Tibial artery (tissue), 4 donors: ENCODE measurements at regions of chr4 and their contacts with region 1.

Region 1: GRCh38 chr4:164177153-164177552 is 576.8 kb upstream of the SMIM31 start:
- DNase-seq: no peak
- H3K4me3 ChIP-seq: no peak overlapping the region
- H3K27ac ChIP-seq: no peak overlapping the region
- H3K4me1 ChIP-seq: no peaks in the 10 kb centered on the region
- H3K27me3 ChIP-seq: no peaks in the 10 kb centered on the region
- CTCF ChIP-seq: no peak

Region 2: DNA sequence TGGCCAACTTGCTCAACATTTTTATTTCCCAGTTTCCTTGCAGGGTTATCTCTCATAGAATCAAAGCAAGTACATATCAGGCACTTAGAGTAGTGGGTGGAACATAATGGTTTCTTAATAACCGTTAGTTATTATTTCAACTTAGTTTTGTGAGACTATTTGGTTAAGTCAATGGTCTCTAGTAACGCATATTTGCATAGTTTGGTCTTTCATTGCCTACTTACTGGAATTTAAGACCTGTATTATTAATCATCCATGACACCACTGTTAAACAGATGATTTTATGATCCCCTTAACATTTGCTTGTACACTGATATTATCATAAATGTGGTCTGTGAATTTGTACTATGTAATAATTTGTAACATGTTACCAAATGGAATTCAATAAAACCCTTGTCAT is 505.9 kb after region 1 on chr4:
- intact Hi-C with region 1: loop called (anchors 5 kb)
- DNase-seq: no peak
- H3K4me3 ChIP-seq: no peak overlapping the region
- H3K27ac ChIP-seq: no peak overlapping the region
- H3K4me1 ChIP-seq: no peaks in the 10 kb centered on the region
- H3K27me3 ChIP-seq: no peaks in the 10 kb centered on the region
- CTCF ChIP-seq: no peak

Region 3: DNA sequence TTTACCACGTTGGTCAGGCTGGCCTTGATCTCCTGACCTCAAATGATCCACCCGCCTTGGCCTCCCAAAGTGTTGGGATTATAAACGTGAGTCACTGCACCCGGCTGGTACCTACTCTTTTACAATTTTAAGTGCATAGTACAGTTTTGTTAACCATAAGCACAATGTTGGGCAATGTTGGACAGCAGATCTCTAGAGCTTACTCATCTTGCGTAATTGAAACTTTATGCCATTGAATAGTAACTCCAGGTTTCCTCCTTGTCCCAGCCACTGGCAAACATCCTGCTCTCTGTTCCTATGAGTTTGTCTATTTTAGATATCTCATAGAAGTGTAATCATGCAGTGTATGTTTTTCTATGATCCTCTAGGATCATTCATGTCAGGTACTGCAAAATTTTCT is 1192.4 kb after region 1 on chr4:
- intact Hi-C with region 1: no loop called
- DNase-seq: no peak
- H3K4me3 ChIP-seq: no peak overlapping the region
- H3K27ac ChIP-seq: no peak overlapping the region
- H3K4me1 ChIP-seq: no peaks in the 10 kb centered on the region
- H3K27me3 ChIP-seq: no peaks in the 10 kb centered on the region
- CTCF ChIP-seq: no peak